HAP-1 (cell line): ENCODE measurements at regions of chr17 and their contacts with region 1.

Region 1: DNA sequence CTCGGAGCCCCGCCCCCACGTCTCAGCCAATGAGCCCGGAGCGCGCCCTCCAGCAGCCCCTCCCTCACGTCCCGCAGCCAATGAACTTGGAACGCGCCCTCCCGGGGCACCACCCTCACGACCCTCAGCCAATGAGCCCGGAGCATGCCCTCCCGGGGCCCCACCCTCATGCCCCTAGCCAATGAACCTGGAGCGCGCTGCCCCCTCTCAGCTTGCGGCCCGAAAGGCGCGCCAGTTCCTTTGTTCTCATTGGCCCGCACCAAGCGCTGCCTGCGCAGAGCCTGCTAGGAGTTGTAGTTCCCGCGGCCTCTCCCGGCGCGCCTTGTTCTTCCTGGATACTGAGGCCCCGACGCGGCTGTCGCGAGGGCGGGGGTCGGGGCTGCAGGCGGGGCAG is at the start of gene LRRC45:
- DNase-seq: peak; percentile 99 to 100
- H3K4me3 ChIP-seq: peak within 1 kb of the TSS; percentile 99
- H3K4me1 ChIP-seq: peaks cover 11% of the 10 kb centered on the region
- H3K27me3 ChIP-seq: no peaks in the 10 kb centered on the region

Region 2: DNA sequence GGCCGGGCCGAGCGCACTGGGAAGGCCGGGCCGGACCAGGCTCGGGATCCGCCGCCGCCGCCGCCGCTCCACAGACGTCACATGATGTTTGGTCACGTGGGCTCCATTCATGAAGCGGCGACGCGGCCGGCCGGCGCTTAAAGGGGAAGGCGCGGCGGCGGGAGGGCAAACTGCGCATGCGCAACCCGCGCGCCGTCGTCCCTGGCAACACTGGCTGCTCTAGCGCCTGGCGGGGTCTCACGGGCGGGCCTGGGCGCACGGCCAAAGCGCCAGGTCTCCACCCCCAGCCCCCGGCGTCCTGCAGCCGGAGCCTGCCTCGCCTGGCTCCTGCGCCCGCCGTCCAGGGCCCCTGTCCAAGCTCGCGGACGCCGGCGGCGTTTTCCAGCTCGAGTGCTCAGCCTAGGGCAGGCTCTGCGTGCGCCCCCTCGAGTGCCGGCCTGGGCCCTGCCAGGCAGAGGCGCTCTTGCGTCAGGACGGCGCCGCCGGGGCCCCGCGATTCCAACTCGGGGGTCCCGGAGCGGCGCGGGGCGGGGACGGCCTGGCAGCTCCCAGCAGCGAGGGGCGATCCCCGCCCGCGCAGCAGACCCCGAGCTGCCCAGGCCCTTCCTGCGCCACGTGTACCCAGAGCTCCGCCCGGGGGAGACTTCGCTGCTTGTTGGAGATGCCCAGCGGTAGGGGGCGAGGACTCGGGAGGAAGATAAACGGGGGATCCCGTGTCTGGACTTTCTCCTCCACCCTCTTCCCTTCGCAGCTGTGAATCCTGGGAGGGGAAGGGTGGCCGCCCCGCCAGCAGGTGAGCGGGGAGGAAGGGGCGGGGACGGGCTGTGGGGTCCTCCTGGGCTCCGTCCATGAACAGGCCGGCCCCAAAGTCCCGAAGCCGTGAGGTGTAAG is 95.1 kb before region 1 on chr17 and contains the start of gene MAFG:
- in situ Hi-C with region 1: loop called (anchors 5 kb)
- DNase-seq: peak; percentile 89 to 94
- H3K4me3 ChIP-seq: peak within 1 kb of the TSS; percentile 56
- H3K4me1 ChIP-seq: peaks cover 11% of the 10 kb centered on the region; the same call in 1 of the 2 replicates
- H3K27me3 ChIP-seq: no peaks in the 10 kb centered on the region

Region 3: GRCh38 chr17:82098072-82098821 is 75.3 kb after region 1 on chr17 and contains the start of gene FASN:
- in situ Hi-C with region 1: no loop called
- DNase-seq: peak; percentile 82 to 96
- H3K4me3 ChIP-seq: peak within 1 kb of the TSS; percentile 74
- H3K4me1 ChIP-seq: peaks cover 25% of the 10 kb centered on the region
- H3K27me3 ChIP-seq: no peaks in the 10 kb centered on the region